A549 (cell line): ENCODE measurements at regions of chr3 and their contacts with region 1.

Region 1: GRCh38 chr3:12632523-12632922 is 31.4 kb downstream of the RAF1 start:
- DNase-seq: no peak
- ATAC-seq: no peak
- H3K4me3 ChIP-seq: no peak overlapping the region
- H3K27ac ChIP-seq: no peak overlapping the region
- H3K4me1 ChIP-seq: peaks cover 7% of the 10 kb centered on the region
- CTCF ChIP-seq: no peak
- EP300 ChIP-seq: no peak
- POLR2A ChIP-seq: no peak
- RAD21 ChIP-seq: no peak

Region 2: DNA sequence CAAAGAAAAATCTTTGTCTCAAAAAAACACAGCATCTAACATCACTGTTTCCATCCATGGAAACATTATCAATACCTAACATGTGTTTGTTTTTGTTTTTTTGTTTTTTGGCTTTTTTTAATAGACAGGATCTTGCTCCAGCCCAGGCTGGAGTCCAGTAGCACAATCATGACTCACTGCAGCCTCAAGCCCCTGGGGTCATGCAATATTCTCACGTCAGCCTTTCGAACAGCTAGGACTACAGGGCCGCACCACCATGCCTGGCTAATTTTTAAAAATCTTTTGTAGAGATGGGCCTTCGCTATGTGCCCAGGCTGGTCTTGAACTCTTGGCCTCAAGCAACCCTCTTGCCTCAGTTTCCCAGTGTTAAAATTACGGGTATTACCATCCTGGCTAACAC is 21.4 kb before region 1 on chr3:
- CTCF ChIA-PET with region 1: interaction called, 3 read pairs
- POLR2A ChIA-PET with region 1: interaction called, 12 read pairs
- DNase-seq: no peak
- ATAC-seq: no peak
- H3K4me3 ChIP-seq: no peak overlapping the region
- H3K27ac ChIP-seq: no peak overlapping the region
- H3K4me1 ChIP-seq: no peaks in the 10 kb centered on the region
- CTCF ChIP-seq: no peak
- EP300 ChIP-seq: no peak
- POLR2A ChIP-seq: no peak
- RAD21 ChIP-seq: no peak